WTC11 (cell line): ENCODE measurements at regions of chr20 and their contacts with region 1.

Region 1: DNA sequence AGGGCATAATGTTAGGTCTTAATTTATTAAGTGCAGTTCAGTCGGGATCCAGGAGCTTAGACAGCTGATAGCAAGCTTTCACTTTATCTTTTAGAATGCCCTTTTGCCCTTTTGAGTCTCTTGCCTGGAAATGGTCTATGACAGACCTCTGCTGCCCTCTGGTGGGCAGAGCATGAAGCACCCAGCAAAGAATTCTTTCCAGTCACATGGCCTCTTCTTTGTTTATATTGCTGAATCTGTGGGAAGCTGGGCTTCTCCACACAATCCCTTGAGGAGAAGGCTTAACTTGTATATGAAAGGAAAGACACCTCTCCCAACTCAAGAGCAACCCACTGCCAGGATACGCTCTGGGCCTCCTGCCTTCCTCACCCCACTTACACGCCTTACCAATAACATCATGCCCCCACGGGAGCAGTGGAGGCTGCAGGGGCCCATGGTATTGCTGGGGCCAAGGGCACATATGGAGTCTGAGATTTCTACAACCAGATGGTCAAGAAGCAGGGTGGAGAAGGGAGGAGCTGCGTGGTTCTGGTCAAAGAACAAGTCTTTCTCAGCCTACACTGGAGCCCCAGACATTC is 20.4 kb downstream of the WFDC3 start:
- DNase-seq: peak; percentile 87
- ATAC-seq: peak; percentile 79
- H3K4me3 Mint-ChIP-seq: no peak overlapping the region
- H3K27ac Mint-ChIP-seq: peak overlapping the region; percentile 73
- H3K4me1 Mint-ChIP-seq: peaks cover 29% of the 10 kb centered on the region
- H3K27me3 Mint-ChIP-seq: no peaks in the 10 kb centered on the region
- CTCF ChIP-seq: peak; percentile 95

Region 2: GRCh38 chr20:45362804-45363610 is 408.3 kb before region 1 on chr20 and contains the start of gene SYS1:
- CTCF ChIA-PET with region 1: interaction called, 18 read pairs
- POLR2A ChIA-PET with region 1: no interaction called
- DNase-seq: peak; percentile 99
- ATAC-seq: peak; percentile 89
- H3K4me3 Mint-ChIP-seq: peak within 1 kb of the TSS; percentile 97
- H3K27ac Mint-ChIP-seq: peak within 1 kb of the TSS; percentile 98
- H3K4me1 Mint-ChIP-seq: peaks cover 25% of the 10 kb centered on the region
- H3K27me3 Mint-ChIP-seq: no peaks in the 10 kb centered on the region
- CTCF ChIP-seq: peak; percentile 77
- total RNA-seq, gene SYS1: 15.4 to 20.1 TPM (median 16.4 TPM) in 3 replicates

Region 3: GRCh38 chr20:45450097-45450818 is 321.0 kb before region 1 on chr20:
- CTCF ChIA-PET with region 1: interaction called, 35 read pairs
- POLR2A ChIA-PET with region 1: no interaction called
- DNase-seq: no peak
- ATAC-seq: peak; percentile 59
- H3K4me3 Mint-ChIP-seq: no peak overlapping the region
- H3K27ac Mint-ChIP-seq: no peak overlapping the region
- H3K4me1 Mint-ChIP-seq: peaks cover 3% of the 10 kb centered on the region; the same call in 1 of the 2 replicates
- H3K27me3 Mint-ChIP-seq: peaks cover 3% of the 10 kb centered on the region; the same call in 1 of the 2 replicates
- CTCF ChIP-seq: peak; percentile 70

Region 4: DNA sequence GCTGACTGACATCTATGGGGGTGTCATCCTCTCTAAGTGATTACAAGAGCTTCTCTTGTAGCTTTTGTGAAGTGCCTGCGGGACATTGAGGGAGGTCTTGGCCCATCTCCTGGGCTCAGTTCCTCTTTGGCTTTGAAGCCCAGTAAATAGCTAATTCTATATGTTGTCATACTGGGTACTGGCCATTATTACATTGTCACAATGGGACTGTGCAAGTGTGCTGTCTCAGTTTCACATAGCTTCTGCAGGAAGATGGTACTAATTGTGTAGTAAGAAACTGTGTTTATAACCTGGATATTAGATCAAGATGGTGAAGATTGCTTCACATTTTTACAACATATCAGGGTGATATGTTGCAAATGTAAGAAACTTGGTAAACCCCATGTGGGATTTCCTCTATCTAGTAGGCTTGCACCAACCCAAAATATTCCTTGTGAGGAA is 275.8 kb before region 1 on chr20:
- CTCF ChIA-PET with region 1: interaction called, 34 read pairs
- POLR2A ChIA-PET with region 1: no interaction called
- DNase-seq: no peak
- ATAC-seq: no peak
- H3K4me3 Mint-ChIP-seq: no peak overlapping the region
- H3K27ac Mint-ChIP-seq: no peak overlapping the region
- H3K4me1 Mint-ChIP-seq: 0 out of 2 replicates have a peak, but pooled peaks cover 4% of the 10 kb centered on the region
- H3K27me3 Mint-ChIP-seq: no peaks in the 10 kb centered on the region
- CTCF ChIP-seq: no peak

Region 5: DNA sequence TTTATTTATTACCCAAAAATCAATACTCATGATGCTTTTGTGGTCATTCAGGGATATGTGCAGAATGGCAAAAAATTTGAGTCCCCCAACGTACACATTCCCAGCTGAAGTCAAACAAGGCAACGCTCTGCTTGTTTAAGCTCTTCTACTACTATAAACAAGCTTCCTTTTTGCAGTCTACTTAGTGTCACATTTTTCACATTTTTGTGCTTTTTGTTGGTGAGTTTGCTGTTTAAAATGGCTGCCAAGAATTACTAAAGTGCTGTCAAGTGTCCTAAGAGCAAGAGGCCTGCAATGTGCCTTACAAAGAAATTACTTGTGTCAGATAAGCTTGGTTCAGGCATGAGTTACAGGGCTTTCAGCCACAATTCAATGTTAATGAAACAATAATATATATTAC is 194.3 kb before region 1 on chr20:
- CTCF ChIA-PET with region 1: interaction called, 10 read pairs
- POLR2A ChIA-PET with region 1: no interaction called
- DNase-seq: no peak
- ATAC-seq: no peak
- H3K4me3 Mint-ChIP-seq: no peak overlapping the region
- H3K27ac Mint-ChIP-seq: no peak overlapping the region; the same call in 1 of the 2 replicates
- H3K4me1 Mint-ChIP-seq: peaks cover 48% of the 10 kb centered on the region
- H3K27me3 Mint-ChIP-seq: no peaks in the 10 kb centered on the region; the same call in 1 of the 2 replicates
- CTCF ChIP-seq: no peak

Region 6: DNA sequence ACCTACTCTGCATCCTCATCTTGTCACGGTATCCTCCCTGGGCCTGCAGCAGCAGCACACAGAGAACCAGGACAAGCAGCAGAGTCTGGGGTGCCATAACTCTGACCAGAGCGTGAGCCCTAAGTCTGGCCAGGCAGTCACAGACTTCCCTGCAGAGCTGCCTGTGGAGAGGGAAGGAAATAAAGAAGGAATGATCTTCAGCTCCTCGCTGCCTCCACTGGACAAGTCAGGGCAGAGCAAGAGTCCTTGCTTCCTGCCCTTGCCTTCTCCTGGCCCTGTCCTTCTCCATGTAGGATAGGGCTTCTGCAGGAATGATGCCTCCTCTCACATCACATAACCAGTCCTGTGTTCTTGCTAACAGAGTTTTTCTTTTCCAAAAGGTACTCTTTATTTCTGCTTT is 85.4 kb before region 1 on chr20:
- CTCF ChIA-PET with region 1: interaction called, 13 read pairs
- POLR2A ChIA-PET with region 1: no interaction called
- DNase-seq: peak; percentile 43
- ATAC-seq: peak; percentile 100
- H3K4me3 Mint-ChIP-seq: no peak overlapping the region
- H3K27ac Mint-ChIP-seq: no peak overlapping the region
- H3K4me1 Mint-ChIP-seq: peaks cover 7% of the 10 kb centered on the region
- H3K27me3 Mint-ChIP-seq: peaks cover 5% of the 10 kb centered on the region; the same call in 1 of the 2 replicates
- CTCF ChIP-seq: no peak

Region 7: DNA sequence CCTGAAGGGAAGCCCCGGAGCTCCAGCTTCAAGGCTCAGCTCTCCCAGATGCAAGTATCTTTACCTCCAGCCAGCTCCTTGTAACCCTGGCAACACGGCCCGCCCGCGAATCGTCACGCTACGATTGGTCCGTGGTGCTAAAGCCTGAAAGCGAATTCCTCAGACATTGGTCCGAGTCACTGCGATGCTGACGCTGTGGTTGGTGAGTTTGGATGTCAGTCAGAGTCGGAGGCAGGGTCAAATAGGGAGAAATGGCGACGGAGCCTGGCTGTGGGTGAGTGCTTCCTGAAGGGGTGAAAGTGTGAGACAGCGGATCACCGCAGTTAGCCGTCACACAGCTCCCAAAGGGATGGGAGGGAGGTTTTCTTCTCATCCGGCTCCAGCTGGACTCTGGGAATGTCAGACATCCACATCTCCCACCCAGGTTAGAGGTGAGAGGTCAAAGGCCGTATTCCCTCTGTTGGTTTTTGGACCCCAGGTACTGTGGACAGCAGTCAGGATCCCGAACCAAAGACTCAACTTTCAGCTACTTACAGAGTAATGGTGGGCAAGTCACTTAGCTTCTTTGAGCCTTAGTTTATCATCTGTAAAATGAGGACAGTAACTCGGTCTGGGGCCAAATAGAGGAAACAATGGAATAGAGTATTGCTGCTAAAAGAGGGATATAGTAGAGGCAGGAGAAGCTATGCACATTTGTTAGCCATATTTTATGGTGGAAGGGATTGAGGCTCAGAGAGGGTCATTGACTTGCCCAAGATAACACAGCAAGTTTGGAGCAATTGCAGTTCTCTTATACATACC is 109.9 kb after region 1 on chr20 and contains the start of gene ZSWIM1:
- CTCF ChIA-PET with region 1: interaction called, 10 read pairs
- POLR2A ChIA-PET with region 1: no interaction called
- DNase-seq: peak; percentile 100
- ATAC-seq: peak; percentile 99
- H3K4me3 Mint-ChIP-seq: peak within 1 kb of the TSS; percentile 98
- H3K27ac Mint-ChIP-seq: peak within 1 kb of the TSS; percentile 97
- H3K4me1 Mint-ChIP-seq: peaks cover 13% of the 10 kb centered on the region
- H3K27me3 Mint-ChIP-seq: no peaks in the 10 kb centered on the region
- CTCF ChIP-seq: no peak
- total RNA-seq, gene ZSWIM1: 15.2 to 17.4 TPM (median 17.0 TPM) in 3 replicates

Region 8: GRCh38 chr20:45987108-45987780 is 216.0 kb after region 1 on chr20:
- CTCF ChIA-PET with region 1: no interaction called
- POLR2A ChIA-PET with region 1: no interaction called
- DNase-seq: peak; percentile 93
- ATAC-seq: peak; percentile 91
- H3K4me3 Mint-ChIP-seq: no peak overlapping the region
- H3K27ac Mint-ChIP-seq: no peak overlapping the region
- H3K4me1 Mint-ChIP-seq: peaks cover 14% of the 10 kb centered on the region
- H3K27me3 Mint-ChIP-seq: peaks cover 6% of the 10 kb centered on the region
- CTCF ChIP-seq: peak; percentile 93